H1 (cell line): ENCODE measurements at regions of chr21 and their contacts with region 1.

Region 1: GRCh38 chr21:14120091-14120734 is 90.5 kb downstream of the LIPI start:
- DNase-seq: peak in 1 of 2 experiments; percentile 84
- H3K4me3 ChIP-seq: no peak overlapping the region
- H3K27ac ChIP-seq: no peak overlapping the region
- H3K4me1 ChIP-seq: no peaks in the 10 kb centered on the region; a peak in 1 of 7 replicates
- H3K27me3 ChIP-seq: no peaks in the 10 kb centered on the region
- CTCF ChIP-seq: peak; percentile 58 to 88 (median 81); a peak in 3 of 4 replicates
- EP300 ChIP-seq: no peak
- POLR2A ChIP-seq: no peak
- RAD21 ChIP-seq: peak; percentile 70 to 75

Region 2: GRCh38 chr21:14092834-14093560 is 27.2 kb before region 1 on chr21:
- CTCF ChIA-PET with region 1: interaction called, 16 read pairs
- POLR2A ChIA-PET with region 1: no interaction called
- DNase-seq: no peak
- H3K4me3 ChIP-seq: no peak overlapping the region
- H3K27ac ChIP-seq: no peak overlapping the region
- H3K4me1 ChIP-seq: no peaks in the 10 kb centered on the region
- H3K27me3 ChIP-seq: no peaks in the 10 kb centered on the region
- CTCF ChIP-seq: no peak
- EP300 ChIP-seq: no peak
- POLR2A ChIP-seq: no peak
- RAD21 ChIP-seq: no peak

Region 3: DNA sequence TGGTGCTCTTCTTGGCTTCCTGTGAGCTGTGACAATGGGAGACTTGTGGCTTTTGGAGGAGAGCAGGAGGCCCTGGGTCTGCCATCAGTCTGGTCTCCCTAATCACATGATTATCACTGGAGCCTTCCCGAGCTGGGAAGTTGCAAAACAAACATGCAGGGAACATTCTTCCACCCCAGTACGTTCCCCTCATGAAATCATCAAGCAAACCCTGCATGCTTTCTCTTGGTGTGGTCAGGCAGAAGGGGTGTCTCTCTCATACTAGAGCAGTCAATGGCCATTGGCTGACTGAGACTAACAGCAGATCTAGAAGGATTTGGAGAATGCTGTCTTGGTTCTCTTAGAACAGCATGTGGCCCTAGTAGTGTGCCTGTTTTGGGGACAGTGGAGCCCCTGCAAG is 20.6 kb before region 1 on chr21:
- CTCF ChIA-PET with region 1: interaction called, 17 read pairs
- POLR2A ChIA-PET with region 1: interaction called, 4 read pairs
- DNase-seq: no peak
- H3K4me3 ChIP-seq: no peak overlapping the region
- H3K27ac ChIP-seq: no peak overlapping the region
- H3K4me1 ChIP-seq: peaks cover 0 to 2% (median 0%) of the 10 kb centered on the region in 4 experiments; a peak in 1 of 7 replicates
- H3K27me3 ChIP-seq: no peaks in the 10 kb centered on the region
- CTCF ChIP-seq: no peak
- EP300 ChIP-seq: no peak
- POLR2A ChIP-seq: no peak
- RAD21 ChIP-seq: no peak